ENCODE measurements at regions of chr2 and their contacts with region 1.

Region 1: GRCh38 chr2:33033606-33034081 is 86.9 kb downstream of the LTBP1 start:
- DNase-seq: no peak
- H3K4me3 ChIP-seq: peak overlapping the region; percentile 34
- H3K27ac ChIP-seq: no peak overlapping the region
- H3K4me1 ChIP-seq: no peaks in the 10 kb centered on the region
- H3K27me3 ChIP-seq: no peaks in the 10 kb centered on the region
- CTCF ChIP-seq: peak in 2 of 3 donors; percentile 37 to 39
- EP300 ChIP-seq: no peak
- POLR2A ChIP-seq: no peak

Region 2: GRCh38 chr2:32553829-32554432 is 479.7 kb before region 1 on chr2:
- intact Hi-C with region 1: loop called in 1 of 4 experiments (anchors 10 kb)
- DNase-seq: no peak
- H3K4me3 ChIP-seq: no peak overlapping the region
- H3K27ac ChIP-seq: no peak overlapping the region
- H3K4me1 ChIP-seq: no peaks in the 10 kb centered on the region
- H3K27me3 ChIP-seq: no peaks in the 10 kb centered on the region
- CTCF ChIP-seq: peak; percentile 32 to 54 (median 49)
- EP300 ChIP-seq: no peak
- POLR2A ChIP-seq: no peak

Region 3: GRCh38 chr2:32977228-32977758 is 56.4 kb before region 1 on chr2:
- intact Hi-C with region 1: no loop called
- DNase-seq: no peak
- H3K4me3 ChIP-seq: no peak overlapping the region
- H3K27ac ChIP-seq: no peak overlapping the region
- H3K4me1 ChIP-seq: no peaks in the 10 kb centered on the region
- H3K27me3 ChIP-seq: no peaks in the 10 kb centered on the region
- CTCF ChIP-seq: no peak
- EP300 ChIP-seq: no peak
- POLR2A ChIP-seq: no peak

Region 4: DNA sequence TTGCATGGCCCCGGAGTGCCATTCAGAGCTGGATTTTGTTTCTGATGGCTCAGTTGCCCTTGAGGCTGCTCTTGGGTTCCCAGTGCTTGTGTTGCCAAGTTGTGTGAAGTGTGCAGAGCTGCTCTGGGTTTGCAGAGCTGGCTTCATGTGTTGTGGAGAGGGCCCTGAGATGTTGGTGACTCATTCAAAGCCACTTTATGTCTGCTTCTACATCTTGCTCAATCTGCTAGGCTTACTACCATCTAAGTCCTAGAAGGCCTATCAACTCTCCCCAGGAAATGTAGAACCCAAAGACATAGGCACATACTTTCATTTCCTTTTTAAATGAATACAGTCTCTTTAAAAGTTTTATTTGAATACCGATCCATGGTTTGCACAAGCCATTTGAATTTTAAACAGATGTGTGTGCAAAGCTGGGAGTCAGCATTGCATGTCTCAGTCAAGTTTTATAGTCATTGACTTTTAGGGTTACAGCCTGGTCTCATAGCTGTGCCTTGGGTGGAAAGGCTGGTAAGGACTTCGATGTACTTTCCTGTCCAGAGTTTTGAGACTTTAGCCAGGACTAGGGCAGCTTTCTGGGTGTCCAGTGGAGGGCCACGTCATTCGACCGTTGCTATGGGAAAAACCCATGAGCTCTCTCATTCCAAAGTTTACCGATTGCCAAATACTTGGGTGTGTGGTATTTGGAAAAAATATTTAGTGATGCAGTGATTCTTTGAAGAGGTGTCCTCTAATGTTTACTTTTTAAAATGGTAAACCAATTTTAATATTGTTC is 18.1 kb after region 1 on chr2:
- intact Hi-C with region 1: no loop called
- DNase-seq: no peak
- H3K4me3 ChIP-seq: no peak overlapping the region
- H3K27ac ChIP-seq: no peak overlapping the region
- H3K4me1 ChIP-seq: no peaks in the 10 kb centered on the region
- H3K27me3 ChIP-seq: no peaks in the 10 kb centered on the region
- CTCF ChIP-seq: no peak
- EP300 ChIP-seq: no peak
- POLR2A ChIP-seq: no peak

Region 5: GRCh38 chr2:33267756-33268155 is 234.1 kb after region 1 on chr2:
- intact Hi-C with region 1: loop called in 2 of 4 experiments (anchors 5 to 10 kb)
- DNase-seq: no peak
- H3K4me3 ChIP-seq: no peak overlapping the region
- H3K27ac ChIP-seq: no peak overlapping the region
- H3K4me1 ChIP-seq: no peaks in the 10 kb centered on the region
- H3K27me3 ChIP-seq: no peaks in the 10 kb centered on the region
- CTCF ChIP-seq: no peak
- EP300 ChIP-seq: no peak
- POLR2A ChIP-seq: no peak

Region 6: GRCh38 chr2:33380001-33380609 is 346.5 kb after region 1 on chr2:
- intact Hi-C with region 1: loop called (anchors 5 to 10 kb)
- DNase-seq: no peak
- H3K4me3 ChIP-seq: no peak overlapping the region
- H3K27ac ChIP-seq: no peak overlapping the region
- H3K4me1 ChIP-seq: no peaks in the 10 kb centered on the region
- H3K27me3 ChIP-seq: no peaks in the 10 kb centered on the region
- CTCF ChIP-seq: peak in 1 of 3 donors; percentile 19
- EP300 ChIP-seq: no peak
- POLR2A ChIP-seq: no peak

Region 7: DNA sequence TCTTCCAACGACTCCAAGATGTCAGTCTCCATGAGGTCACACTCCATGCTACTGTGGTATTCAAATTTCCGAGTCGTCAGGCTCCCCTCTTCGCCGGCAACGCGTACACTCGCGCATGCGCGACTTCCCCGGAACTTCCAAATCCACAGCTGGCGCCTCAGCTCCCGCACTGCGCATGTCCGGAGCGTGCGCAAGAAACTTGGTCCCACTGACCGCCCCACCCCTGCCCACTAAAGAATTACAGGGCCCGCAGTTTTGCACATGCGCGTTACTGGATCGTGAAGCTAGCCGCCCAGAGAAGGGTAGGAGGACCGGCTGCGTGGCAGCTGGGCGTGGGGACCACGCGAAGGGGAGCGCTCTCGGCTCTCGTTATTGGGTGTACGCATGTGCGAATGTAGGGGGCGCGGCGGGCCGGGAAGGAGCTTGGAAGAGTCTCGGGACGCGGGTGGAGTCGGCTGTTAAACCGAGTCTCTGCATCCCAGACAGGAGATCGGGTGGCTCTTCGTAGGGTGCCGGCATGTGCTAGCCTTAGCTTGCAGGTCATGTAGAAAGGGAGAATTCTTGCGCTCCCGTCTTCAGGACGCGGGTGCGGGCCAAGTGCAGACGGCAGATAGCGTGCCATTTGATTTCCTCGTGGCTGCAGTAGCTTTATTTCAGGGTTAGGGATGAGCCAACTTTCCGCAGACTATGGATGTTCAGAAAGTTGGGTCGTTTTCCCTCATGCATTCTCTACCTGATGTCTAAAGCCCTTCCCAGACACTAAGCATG is 565.7 kb after region 1 on chr2 and contains the start of gene FAM98A:
- intact Hi-C with region 1: loop called in 1 of 4 experiments (anchors 10 kb)
- DNase-seq: peak; percentile 98 to 100 (median 99)
- H3K4me3 ChIP-seq: peak within 1 kb of the TSS; percentile 96
- H3K27ac ChIP-seq: peak within 1 kb of the TSS in 1 of 2 donors; percentile 61
- H3K4me1 ChIP-seq: peaks cover 2% of the 10 kb centered on the region
- H3K27me3 ChIP-seq: no peaks in the 10 kb centered on the region
- CTCF ChIP-seq: peak in 1 of 3 donors; percentile 15
- EP300 ChIP-seq: no peak
- POLR2A ChIP-seq: peak; percentile 4
- total RNA-seq, gene FAM98A: 10.1 to 58.8 (median 47.7) TPM